ENCODE measurements at regions of chrX and their contacts with region 1.

Region 1: GRCh38 chrX:101348452-101349192 is at the start of gene TIMM8A:
- DNase-seq: peak; percentile 48 to 79 (median 72)
- ATAC-seq: peak; percentile 99
- H3K4me3 ChIP-seq: peak within 1 kb of the TSS; percentile 75
- H3K4me3 Mint-ChIP-seq: peak within 1 kb of the TSS; percentile 84 to 93 (median 91)
- H3K27ac ChIP-seq: peak within 1 kb of the TSS; percentile 91
- H3K27ac Mint-ChIP-seq: peak within 1 kb of the TSS; percentile 80 to 96 (median 91)
- H3K4me1 ChIP-seq: peaks cover 0 to 4% of the 10 kb centered on the region in 2 donors
- H3K4me1 Mint-ChIP-seq: peaks cover 0 to 25% (median 19%) of the 10 kb centered on the region in 7 donors
- H3K27me3 ChIP-seq: no peaks in the 10 kb centered on the region
- H3K27me3 Mint-ChIP-seq: no peaks in the 10 kb centered on the region
- total RNA-seq, gene TIMM8A: 6.7 to 13.6 (median 12.2) TPM

Region 2: DNA sequence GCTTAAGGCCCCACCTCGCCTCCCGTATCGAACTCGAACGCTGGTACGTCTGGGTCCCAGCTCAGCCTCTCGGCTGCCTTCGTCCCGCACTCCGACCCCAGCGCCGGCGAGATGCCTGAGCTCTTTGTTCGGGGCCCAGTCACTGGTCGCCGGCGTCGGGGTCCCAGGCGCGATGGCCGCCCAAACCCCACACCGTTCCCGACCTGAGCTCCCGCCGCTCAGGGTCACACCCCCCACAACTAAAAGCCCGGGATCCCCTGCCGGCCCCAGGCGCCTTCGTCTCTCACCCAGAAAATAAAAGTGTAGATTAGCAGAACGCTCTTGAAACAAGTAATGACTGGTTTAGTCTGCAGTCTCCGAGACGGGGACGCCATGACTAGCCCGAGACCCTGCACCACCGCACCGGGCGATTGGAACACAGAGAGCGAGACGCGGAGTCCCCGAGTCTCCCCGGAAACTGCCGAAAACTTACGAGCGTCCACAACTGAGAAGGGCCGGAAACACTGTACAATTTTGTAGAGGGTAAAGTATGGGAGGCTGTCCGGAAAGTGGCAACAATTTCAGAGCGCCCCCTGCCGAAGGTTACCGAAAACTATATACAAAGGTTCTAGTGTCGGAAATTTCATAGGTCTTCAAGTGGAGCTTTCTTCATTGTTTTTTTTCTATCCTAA is 712.2 kb before region 1 on chrX and contains the start of gene TSPAN6:
- CTCF ChIA-PET with region 1: no interaction called
- POLR2A ChIA-PET with region 1: no interaction called
- intact Hi-C with region 1: loop called in 1 of 2 experiments (anchors 2 kb)
- DNase-seq: peak; percentile 35 to 81 (median 68)
- ATAC-seq: peak; percentile 99
- H3K4me3 ChIP-seq: peak within 1 kb of the TSS; percentile 50
- H3K4me3 Mint-ChIP-seq: peak within 1 kb of the TSS; percentile 80 to 99 (median 92)
- H3K27ac ChIP-seq: peak within 1 kb of the TSS; percentile 63
- H3K27ac Mint-ChIP-seq: peak within 1 kb of the TSS in 8 of 9 donors; percentile 50 to 94 (median 88)
- H3K4me1 ChIP-seq: no peaks in the 10 kb centered on the region
- H3K4me1 Mint-ChIP-seq: peaks cover 0 to 21% (median 15%) of the 10 kb centered on the region in 7 donors
- H3K27me3 ChIP-seq: no peaks in the 10 kb centered on the region
- H3K27me3 Mint-ChIP-seq: peaks cover 3 to 25% (median 10%) of the 10 kb centered on the region in 5 donors
- total RNA-seq, gene TSPAN6: 1.0 to 2.3 (median 1.9) TPM in 4 of 5 experiments, not detected in the other

Region 3: GRCh38 chrX:100819837-100820666 is 528.6 kb before region 1 on chrX and contains the start of gene CSTF2:
- CTCF ChIA-PET with region 1: no interaction called
- POLR2A ChIA-PET with region 1: no interaction called
- intact Hi-C with region 1: loop called (anchors 2 kb)
- DNase-seq: peak; percentile 58 to 87 (median 81)
- ATAC-seq: peak; percentile 98
- H3K4me3 ChIP-seq: peak within 1 kb of the TSS; percentile 68
- H3K4me3 Mint-ChIP-seq: peak within 1 kb of the TSS; percentile 85 to 96 (median 91)
- H3K27ac ChIP-seq: peak within 1 kb of the TSS; percentile 80
- H3K27ac Mint-ChIP-seq: peak within 1 kb of the TSS; percentile 85 to 97 (median 93)
- H3K4me1 ChIP-seq: no peaks in the 10 kb centered on the region
- H3K4me1 Mint-ChIP-seq: peaks cover 5 to 10% (median 6%) of the 10 kb centered on the region in 7 donors
- H3K27me3 ChIP-seq: no peaks in the 10 kb centered on the region
- H3K27me3 Mint-ChIP-seq: peaks cover 0 to 12% (median 4%) of the 10 kb centered on the region in 5 donors
- total RNA-seq, gene CSTF2: 8.6 to 41.8 (median 16.1) TPM

Region 4: GRCh38 chrX:100829730-100830129 is 518.9 kb before region 1 on chrX:
- CTCF ChIA-PET with region 1: no interaction called
- POLR2A ChIA-PET with region 1: no interaction called
- intact Hi-C with region 1: loop called in 1 of 2 experiments (anchors 2 kb)
- DNase-seq: peak in 4 of 9 donors; percentile 9 to 19 (median 13)
- ATAC-seq: peak; percentile 80
- H3K4me3 ChIP-seq: no peak overlapping the region
- H3K4me3 Mint-ChIP-seq: peak overlapping the region in 9 of 10 donors; percentile 23 to 81 (median 48)
- H3K27ac ChIP-seq: peak overlapping the region; percentile 46
- H3K27ac Mint-ChIP-seq: peak overlapping the region in 8 of 9 donors; percentile 62 to 99 (median 84)
- H3K4me1 ChIP-seq: no peaks in the 10 kb centered on the region
- H3K4me1 Mint-ChIP-seq: peaks cover 8 to 30% (median 13%) of the 10 kb centered on the region in 7 donors
- H3K27me3 ChIP-seq: no peaks in the 10 kb centered on the region
- H3K27me3 Mint-ChIP-seq: no peaks in the 10 kb centered on the region

Region 5: DNA sequence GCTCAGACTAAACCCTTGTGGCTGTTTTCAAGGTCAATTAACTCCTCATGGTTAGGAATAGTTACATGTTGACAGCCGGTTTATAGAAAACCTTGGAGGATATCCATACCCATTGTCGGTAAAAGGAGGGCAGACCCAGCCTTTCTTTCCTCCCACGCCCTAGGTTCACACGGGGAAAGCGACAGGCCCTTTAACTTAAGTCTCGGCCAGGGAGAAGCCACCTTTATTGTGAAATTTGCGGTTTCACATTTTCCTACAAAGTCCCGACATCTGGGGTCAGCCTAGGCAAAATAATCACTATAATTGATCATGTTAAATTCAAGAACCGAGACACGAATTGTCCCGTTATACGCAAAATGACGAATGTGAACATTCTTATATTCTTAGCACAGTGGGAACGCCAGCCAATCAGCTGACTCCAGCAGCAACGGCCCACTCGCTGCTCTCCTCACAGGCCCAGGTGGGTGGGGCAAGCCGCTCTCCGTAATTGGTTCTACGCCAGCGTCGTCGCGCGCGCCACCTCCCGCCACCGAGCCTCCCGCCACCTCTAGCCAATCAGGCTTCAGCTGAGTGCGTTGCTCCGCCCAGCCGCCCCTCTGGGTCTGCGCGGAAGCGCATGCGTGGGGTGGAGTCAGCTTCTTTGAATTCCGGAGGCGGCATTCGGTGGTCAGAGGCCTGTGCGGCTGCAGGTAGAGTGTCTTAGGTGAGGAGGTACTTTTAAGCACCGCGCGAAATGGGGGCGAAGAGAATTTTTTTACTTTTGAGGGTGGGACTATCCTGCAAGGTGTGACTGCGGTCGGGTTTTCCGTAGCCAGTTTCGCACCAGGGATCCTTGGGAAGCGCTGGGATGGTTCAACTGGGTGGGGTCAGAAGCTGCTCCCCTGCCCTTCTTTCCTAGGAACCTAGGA is 250.8 kb before region 1 on chrX and contains the start of gene CENPI:
- CTCF ChIA-PET with region 1: no interaction called
- POLR2A ChIA-PET with region 1: interaction called, 4 read pairs
- intact Hi-C with region 1: loop called in 1 of 2 experiments (anchors 5 kb)
- DNase-seq: peak; percentile 84 to 95 (median 93)
- ATAC-seq: peak; percentile 100
- H3K4me3 ChIP-seq: peak within 1 kb of the TSS; percentile 70
- H3K4me3 Mint-ChIP-seq: peak within 1 kb of the TSS; percentile 69 to 95 (median 90)
- H3K27ac ChIP-seq: peak within 1 kb of the TSS; percentile 84
- H3K27ac Mint-ChIP-seq: peak within 1 kb of the TSS; percentile 83 to 99 (median 93)
- H3K4me1 ChIP-seq: peaks cover 0 to 3% of the 10 kb centered on the region in 2 donors
- H3K4me1 Mint-ChIP-seq: peaks cover 0 to 28% (median 9%) of the 10 kb centered on the region in 7 donors
- H3K27me3 ChIP-seq: no peaks in the 10 kb centered on the region
- H3K27me3 Mint-ChIP-seq: no peaks in the 10 kb centered on the region
- total RNA-seq, gene CENPI: 0.24 to 18.4 (median 0.88) TPM

Region 6: DNA sequence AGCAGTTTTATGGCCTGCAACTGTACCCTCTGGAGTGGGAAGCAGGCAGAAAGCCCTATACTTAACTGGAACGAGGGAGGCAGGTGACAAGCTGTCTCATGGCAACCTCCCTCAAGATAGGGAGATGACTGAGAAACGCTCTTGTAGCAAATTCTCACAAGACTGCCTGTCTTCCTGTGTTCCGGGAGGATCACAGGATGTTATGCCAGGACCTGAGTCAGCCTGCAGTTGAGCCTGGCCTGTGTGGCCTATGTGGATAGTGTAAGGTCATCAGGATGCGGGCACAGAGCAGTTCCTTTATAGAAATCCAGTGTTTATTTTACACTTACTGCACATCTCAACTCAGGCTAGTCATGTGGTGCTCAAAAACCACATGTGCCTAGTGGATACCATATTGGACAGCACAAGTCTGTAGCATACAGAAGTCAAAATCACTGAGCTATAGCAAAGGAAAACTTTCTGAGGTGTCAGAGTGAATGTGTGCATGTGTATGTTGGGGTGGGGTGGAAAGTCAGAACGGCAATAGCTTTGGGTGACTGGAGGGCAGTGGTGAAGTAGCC is 82.7 kb before region 1 on chrX:
- CTCF ChIA-PET with region 1: no interaction called
- POLR2A ChIA-PET with region 1: no interaction called
- intact Hi-C with region 1: no loop called
- DNase-seq: no peak
- ATAC-seq: no peak
- H3K4me3 ChIP-seq: no peak overlapping the region
- H3K4me3 Mint-ChIP-seq: no peak overlapping the region
- H3K27ac ChIP-seq: no peak overlapping the region
- H3K27ac Mint-ChIP-seq: no peak overlapping the region
- H3K4me1 ChIP-seq: no peaks in the 10 kb centered on the region
- H3K4me1 Mint-ChIP-seq: no peaks in the 10 kb centered on the region
- H3K27me3 ChIP-seq: no peaks in the 10 kb centered on the region
- H3K27me3 Mint-ChIP-seq: no peaks in the 10 kb centered on the region

Region 7: GRCh38 chrX:101370888-101371504 is 22.4 kb after region 1 on chrX:
- CTCF ChIA-PET with region 1: no interaction called
- POLR2A ChIA-PET with region 1: no interaction called
- intact Hi-C with region 1: no loop called
- DNase-seq: no peak
- ATAC-seq: no peak
- H3K4me3 ChIP-seq: no peak overlapping the region
- H3K4me3 Mint-ChIP-seq: no peak overlapping the region
- H3K27ac ChIP-seq: no peak overlapping the region
- H3K27ac Mint-ChIP-seq: no peak overlapping the region
- H3K4me1 ChIP-seq: no peaks in the 10 kb centered on the region
- H3K4me1 Mint-ChIP-seq: peaks cover 0 to 4% (median 0%) of the 10 kb centered on the region in 7 donors
- H3K27me3 ChIP-seq: no peaks in the 10 kb centered on the region
- H3K27me3 Mint-ChIP-seq: peaks cover 0 to 9% (median 0%) of the 10 kb centered on the region in 5 donors

Region 8: DNA sequence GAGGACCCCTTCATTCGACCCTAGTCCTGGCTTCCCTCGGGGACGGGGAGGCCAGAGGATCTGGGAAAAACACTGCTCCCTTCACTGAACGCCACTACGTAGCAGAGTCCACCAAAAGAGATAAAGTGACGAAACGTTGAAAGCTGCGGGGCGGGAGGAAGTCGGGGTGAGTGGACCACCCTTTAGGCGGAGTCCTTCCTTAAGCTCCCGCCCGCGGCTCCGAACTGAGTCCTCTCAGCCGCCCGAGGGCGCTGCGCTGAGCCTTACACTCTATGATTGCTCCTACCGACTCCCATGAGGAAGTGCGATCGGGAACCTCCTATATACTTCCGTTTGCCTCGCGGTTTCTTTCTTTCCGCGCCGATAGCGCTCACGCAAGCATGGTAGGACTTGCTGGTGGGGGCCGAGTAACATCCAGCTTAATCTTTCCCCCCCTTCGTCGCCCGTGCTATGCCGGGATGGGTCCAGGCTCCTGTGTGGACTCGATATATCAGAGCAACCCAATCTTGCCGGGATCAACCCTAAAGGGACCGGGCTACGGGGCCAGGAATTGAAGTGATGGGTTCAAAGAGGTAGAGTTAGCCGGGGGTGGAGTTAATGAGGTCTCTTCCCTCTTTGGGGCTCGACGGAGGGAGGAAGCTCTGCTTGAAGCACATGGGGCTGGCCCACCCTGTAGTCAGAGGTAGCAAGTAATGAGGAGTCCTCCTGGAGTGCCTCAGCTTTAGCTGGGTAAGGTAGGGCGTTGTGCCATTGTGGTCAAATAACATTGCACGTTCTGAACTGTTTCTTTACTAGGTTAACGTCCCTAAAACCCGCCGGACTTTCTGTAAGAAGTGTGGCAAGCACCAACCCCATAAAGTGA is 42.3 kb after region 1 on chrX and contains the start of gene RPL36A:
- CTCF ChIA-PET with region 1: no interaction called
- POLR2A ChIA-PET with region 1: interaction called, 4 read pairs
- intact Hi-C with region 1: loop called (anchors 1 kb)
- DNase-seq: peak; percentile 41 to 75 (median 66)
- ATAC-seq: peak; percentile 97
- H3K4me3 ChIP-seq: peak within 1 kb of the TSS; percentile 66
- H3K4me3 Mint-ChIP-seq: peak within 1 kb of the TSS; percentile 81 to 96 (median 90)
- H3K27ac ChIP-seq: peak within 1 kb of the TSS; percentile 80
- H3K27ac Mint-ChIP-seq: peak within 1 kb of the TSS; percentile 80 to 97 (median 94)
- H3K4me1 ChIP-seq: peaks cover 4 to 5% of the 10 kb centered on the region in 2 donors
- H3K4me1 Mint-ChIP-seq: peaks cover 0 to 35% (median 18%) of the 10 kb centered on the region in 7 donors
- H3K27me3 ChIP-seq: no peaks in the 10 kb centered on the region
- H3K27me3 Mint-ChIP-seq: no peaks in the 10 kb centered on the region
- total RNA-seq, gene RPL36A: 113 to 342 (median 282) TPM

Region 9: GRCh38 chrX:101931488-101932248 is 583.0 kb after region 1 on chrX and contains the start of gene ZMAT1:
- CTCF ChIA-PET with region 1: no interaction called
- POLR2A ChIA-PET with region 1: interaction called, 4 read pairs
- intact Hi-C with region 1: loop called (anchors 2 to 5 kb)
- DNase-seq: peak; percentile 73 to 92 (median 87)
- ATAC-seq: peak; percentile 93
- H3K4me3 ChIP-seq: peak within 1 kb of the TSS; percentile 63
- H3K4me3 Mint-ChIP-seq: peak within 1 kb of the TSS; percentile 80 to 95 (median 88)
- H3K27ac ChIP-seq: peak within 1 kb of the TSS; percentile 89
- H3K27ac Mint-ChIP-seq: peak within 1 kb of the TSS; percentile 87 to 99 (median 96)
- H3K4me1 ChIP-seq: peaks cover 0 to 8% of the 10 kb centered on the region in 2 donors
- H3K4me1 Mint-ChIP-seq: peaks cover 8 to 44% (median 33%) of the 10 kb centered on the region in 7 donors
- H3K27me3 ChIP-seq: no peaks in the 10 kb centered on the region
- H3K27me3 Mint-ChIP-seq: no peaks in the 10 kb centered on the region
- total RNA-seq, gene ZMAT1: 3.0 to 48.3 (median 32.2) TPM